Mucosa of descending colon (tissue), 3 donors: ENCODE measurements at regions of chr14 and their contacts with region 1.

Region 1: DNA sequence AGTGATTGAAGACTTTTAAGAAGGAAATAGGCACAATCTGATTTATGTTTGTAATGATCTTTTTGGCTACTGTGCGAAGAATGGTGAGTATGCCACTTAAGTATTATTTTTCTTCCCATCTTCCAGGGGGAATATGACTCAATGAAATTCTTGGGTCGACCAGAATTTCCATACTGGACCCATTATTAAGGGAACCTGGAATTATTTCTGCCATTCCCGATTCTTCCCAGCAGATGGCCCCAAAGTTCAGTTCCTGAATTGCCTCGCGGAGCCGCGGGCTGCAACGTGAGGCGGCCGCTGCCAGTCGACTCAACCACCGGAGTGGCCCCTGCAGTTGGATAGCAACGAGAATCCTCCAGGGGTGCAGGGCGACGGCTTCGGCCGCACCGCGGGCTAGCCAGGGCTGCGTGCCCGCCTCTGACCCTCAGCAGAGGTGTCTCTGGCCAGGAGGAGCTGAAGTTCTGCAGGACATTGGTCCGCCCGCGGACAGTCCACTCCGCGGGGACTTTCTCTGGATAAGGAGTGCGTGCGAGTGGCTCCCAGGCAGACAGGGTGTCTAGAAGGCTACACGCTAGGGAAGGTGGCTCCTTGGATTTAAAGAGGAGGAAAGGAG is 628 bp upstream of the TSHR start:
- DNase-seq: peak; percentile 76 to 86 (median 81)
- ATAC-seq: peak; percentile 90
- H3K4me3 ChIP-seq: no peak overlapping the region
- H3K4me1 ChIP-seq: peaks cover 18% of the 10 kb centered on the region
- CTCF ChIP-seq: peak; percentile 43

Region 2: DNA sequence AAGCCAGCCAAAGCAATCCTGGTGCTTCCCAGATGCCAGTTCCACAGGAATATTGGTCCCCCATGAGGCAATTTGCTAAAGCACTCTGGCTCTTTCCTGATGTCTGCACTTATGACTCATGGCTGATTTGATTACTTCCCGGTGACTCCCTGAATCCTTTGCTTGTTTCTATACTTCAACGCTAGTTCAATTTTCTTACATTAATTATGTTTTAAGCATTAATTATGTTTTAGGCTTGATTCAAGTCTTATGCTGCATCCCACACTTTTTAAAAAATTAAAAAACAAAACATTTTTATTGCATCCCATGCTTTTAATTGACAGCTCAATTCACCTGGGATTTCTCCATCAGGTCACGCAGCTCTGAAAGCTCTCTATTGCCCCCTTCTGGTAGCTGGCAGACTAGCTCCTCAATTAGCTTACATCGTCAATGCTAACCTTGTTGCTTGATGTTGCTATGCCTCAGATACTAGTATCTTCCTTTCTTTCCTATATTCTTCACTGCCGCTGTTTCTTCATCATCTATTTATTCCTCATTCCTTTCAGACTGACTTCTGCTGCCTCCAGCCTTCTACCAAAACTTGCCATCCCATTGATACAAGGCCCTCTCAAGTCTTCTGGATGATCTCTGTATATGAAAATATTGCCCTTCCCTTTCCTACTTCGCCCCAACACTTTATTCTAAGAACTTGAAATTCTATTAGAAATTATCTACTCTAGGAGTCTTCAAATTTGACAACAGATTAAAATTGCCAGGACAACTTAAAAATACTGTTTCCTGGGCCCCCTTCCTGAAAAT is 32.6 kb after region 1 on chr14:
- intact Hi-C with region 1: loop called (anchors 1 to 2 kb)
- DNase-seq: peak in 2 of 3 donors; percentile 30 to 87
- ATAC-seq: peak; percentile 97
- H3K4me3 ChIP-seq: no peak overlapping the region
- H3K4me1 ChIP-seq: no peaks in the 10 kb centered on the region
- CTCF ChIP-seq: peak; percentile 82

Region 3: DNA sequence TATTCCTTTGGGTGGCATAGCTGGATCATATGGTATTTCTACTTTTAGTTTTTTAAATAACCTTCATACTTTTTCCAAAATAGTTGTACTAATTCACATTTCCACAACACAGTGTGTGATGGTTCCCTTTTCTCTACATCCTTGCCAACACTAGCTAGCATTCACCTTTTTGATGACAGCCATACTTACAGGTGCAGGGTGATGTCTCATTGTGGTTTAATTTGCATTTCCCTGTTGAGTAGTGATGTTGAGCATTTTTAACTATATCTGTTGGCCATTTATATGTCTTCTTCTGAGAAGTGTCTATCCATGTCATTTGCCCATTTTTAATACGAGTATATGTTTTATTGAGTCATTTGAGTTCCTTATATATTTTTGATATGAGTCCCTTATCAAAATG is 96.8 kb after region 1 on chr14:
- intact Hi-C with region 1: no loop called
- DNase-seq: no peak
- ATAC-seq: no peak
- H3K4me3 ChIP-seq: no peak overlapping the region
- H3K4me1 ChIP-seq: no peaks in the 10 kb centered on the region
- CTCF ChIP-seq: no peak